ENCODE measurements at regions of chr15 and their contacts with region 1.

Region 1: DNA sequence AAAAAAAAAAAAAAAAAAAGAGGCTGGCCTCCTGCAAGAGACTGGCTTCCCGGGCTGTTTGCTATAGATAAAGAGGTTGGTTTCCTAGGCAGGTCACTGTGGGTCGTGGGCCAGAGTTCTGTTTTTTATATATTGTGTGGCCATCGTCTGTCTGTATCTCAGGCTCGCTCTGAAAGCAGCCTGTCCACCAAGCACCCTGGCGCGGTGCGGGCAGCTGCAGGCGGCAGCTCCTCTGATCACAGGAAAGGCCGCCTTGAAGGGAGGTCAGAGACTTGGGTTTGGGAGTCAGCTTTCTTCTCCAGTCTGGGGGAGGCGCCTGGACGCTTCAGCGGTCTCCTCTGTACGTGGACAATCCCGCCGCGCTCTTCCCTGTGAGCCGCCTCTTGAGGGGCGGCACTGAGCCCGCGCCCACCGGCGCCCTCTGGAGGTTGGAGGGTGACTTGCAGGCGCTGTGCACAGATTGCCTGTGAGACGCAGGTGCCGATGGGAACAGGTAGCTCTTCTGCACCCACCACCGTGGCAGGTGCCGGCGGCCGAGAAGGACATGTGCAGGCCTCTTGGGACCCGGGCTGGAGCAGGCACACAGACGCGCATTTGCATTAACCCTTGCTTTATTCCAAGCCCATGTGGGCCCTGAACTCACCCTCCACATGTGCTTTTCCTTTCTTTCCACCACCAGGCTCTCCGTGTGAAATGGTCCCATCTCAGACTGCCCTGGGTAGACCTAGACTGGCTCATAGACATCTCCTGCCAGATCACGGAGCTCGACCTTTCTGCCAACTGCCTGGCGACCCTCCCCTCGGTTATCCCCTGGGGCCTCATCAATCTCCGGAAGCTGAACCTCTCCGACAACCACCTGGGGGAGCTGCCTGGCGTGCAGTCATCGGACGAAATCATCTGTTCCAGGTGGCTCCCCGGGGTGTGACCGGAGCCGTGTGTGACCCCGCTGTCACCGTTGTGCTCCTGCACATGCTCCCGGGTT is 89.3 kb downstream of the LRRK1 start:
- DNase-seq: peak; percentile 40
- ATAC-seq: peak; percentile 95
- H3K4me3 ChIP-seq: peak overlapping the region; percentile 73
- H3K27ac ChIP-seq: peak overlapping the region; percentile 40; the same call in 1 of the 2 replicates
- H3K4me1 ChIP-seq: peaks cover 11% of the 10 kb centered on the region
- H3K27me3 ChIP-seq: no peaks in the 10 kb centered on the region
- CTCF ChIP-seq: peak; percentile 96 to 100 (median 98)
- EP300 ChIP-seq: no peak
- POLR2A ChIP-seq: no peak; the same call in none of the 2 replicates
- RAD21 ChIP-seq: peak; percentile 67

Region 2: DNA sequence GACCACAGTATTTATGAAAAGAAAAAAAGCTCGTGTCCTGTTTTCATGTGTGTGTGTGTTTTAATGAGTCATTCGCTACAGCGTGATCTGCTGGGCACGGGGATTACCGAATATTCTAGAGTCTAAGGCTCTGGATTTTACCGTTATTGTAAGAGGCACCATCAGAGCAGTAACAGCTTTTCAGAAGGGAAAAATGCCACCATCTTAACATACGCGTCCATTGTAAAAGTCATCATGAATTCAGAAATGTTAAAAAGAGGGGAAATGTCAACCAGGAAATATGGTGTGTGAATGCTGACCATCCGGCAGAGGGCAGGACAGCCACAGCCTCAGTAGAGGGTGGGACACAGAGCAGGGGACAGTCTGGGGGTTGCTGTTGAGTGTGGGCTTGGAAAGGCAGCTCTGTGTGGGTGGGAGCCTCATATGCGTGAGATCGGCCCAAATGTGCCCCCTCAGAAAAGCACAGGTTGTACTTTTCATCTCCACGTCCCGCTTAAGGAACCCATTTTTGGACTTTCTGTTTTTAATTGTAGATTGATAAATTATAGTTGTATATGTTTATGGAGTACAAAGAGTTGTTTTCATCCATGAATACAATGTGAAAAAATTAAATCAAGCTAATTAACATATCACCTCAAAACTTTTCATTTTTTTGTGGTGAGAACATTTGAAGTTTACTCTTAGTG is 336.4 kb before region 1 on chr15:
- CTCF ChIA-PET with region 1: interaction called, 3 read pairs
- POLR2A ChIA-PET with region 1: no interaction called
- RAD21 ChIA-PET with region 1: interaction called, 3 read pairs
- SMC1A ChIA-PET with region 1: no interaction called
- in situ Hi-C with region 1: no loop called
- intact Hi-C with region 1: loop called (anchors 2 kb)
- DNase-seq: no peak
- ATAC-seq: peak; percentile 82
- H3K4me3 ChIP-seq: no peak overlapping the region
- H3K27ac ChIP-seq: no peak overlapping the region
- H3K4me1 ChIP-seq: no peaks in the 10 kb centered on the region
- H3K27me3 ChIP-seq: no peaks in the 10 kb centered on the region
- CTCF ChIP-seq: peak; percentile 31 to 48 (median 45); a peak in 5 of 6 replicates
- EP300 ChIP-seq: no peak
- POLR2A ChIP-seq: no peak
- RAD21 ChIP-seq: peak; percentile 56

Region 3: GRCh38 chr15:100918034-100918689 is 90.3 kb before region 1 on chr15:
- CTCF ChIA-PET with region 1: interaction called, 567 read pairs
- POLR2A ChIA-PET with region 1: interaction called, 60 read pairs
- RAD21 ChIA-PET with region 1: interaction called, 287 read pairs
- SMC1A ChIA-PET with region 1: interaction called, 316 read pairs
- in situ Hi-C with region 1: loop called (anchors 5 kb)
- intact Hi-C with region 1: loop called (anchors 1 kb)
- DNase-seq: no peak
- ATAC-seq: peak; percentile 83
- H3K4me3 ChIP-seq: peak overlapping the region; percentile 89
- H3K27ac ChIP-seq: peak overlapping the region; percentile 83
- H3K4me1 ChIP-seq: peaks cover 21% of the 10 kb centered on the region
- H3K27me3 ChIP-seq: no peaks in the 10 kb centered on the region
- CTCF ChIP-seq: peak; percentile 93 to 98 (median 96)
- EP300 ChIP-seq: no peak
- POLR2A ChIP-seq: peak; percentile 46; the same call in 1 of the 2 replicates
- RAD21 ChIP-seq: peak; percentile 87

Region 4: GRCh38 chr15:100940767-100941379 is 67.6 kb before region 1 on chr15:
- CTCF ChIA-PET with region 1: interaction called, 73 read pairs
- POLR2A ChIA-PET with region 1: interaction called, 9 read pairs
- RAD21 ChIA-PET with region 1: interaction called, 39 read pairs
- SMC1A ChIA-PET with region 1: interaction called, 56 read pairs
- in situ Hi-C with region 1: no loop called
- intact Hi-C with region 1: no loop called
- DNase-seq: no peak
- ATAC-seq: peak; percentile 87
- H3K4me3 ChIP-seq: peak overlapping the region; percentile 31; the same call in 1 of the 2 replicates
- H3K27ac ChIP-seq: peak overlapping the region; percentile 85
- H3K4me1 ChIP-seq: peaks cover 38% of the 10 kb centered on the region
- H3K27me3 ChIP-seq: no peaks in the 10 kb centered on the region
- CTCF ChIP-seq: no peak
- EP300 ChIP-seq: peak; percentile 13 to 32; a peak in 1 of 4 replicates
- POLR2A ChIP-seq: peak; percentile 47
- RAD21 ChIP-seq: no peak

Region 5: DNA sequence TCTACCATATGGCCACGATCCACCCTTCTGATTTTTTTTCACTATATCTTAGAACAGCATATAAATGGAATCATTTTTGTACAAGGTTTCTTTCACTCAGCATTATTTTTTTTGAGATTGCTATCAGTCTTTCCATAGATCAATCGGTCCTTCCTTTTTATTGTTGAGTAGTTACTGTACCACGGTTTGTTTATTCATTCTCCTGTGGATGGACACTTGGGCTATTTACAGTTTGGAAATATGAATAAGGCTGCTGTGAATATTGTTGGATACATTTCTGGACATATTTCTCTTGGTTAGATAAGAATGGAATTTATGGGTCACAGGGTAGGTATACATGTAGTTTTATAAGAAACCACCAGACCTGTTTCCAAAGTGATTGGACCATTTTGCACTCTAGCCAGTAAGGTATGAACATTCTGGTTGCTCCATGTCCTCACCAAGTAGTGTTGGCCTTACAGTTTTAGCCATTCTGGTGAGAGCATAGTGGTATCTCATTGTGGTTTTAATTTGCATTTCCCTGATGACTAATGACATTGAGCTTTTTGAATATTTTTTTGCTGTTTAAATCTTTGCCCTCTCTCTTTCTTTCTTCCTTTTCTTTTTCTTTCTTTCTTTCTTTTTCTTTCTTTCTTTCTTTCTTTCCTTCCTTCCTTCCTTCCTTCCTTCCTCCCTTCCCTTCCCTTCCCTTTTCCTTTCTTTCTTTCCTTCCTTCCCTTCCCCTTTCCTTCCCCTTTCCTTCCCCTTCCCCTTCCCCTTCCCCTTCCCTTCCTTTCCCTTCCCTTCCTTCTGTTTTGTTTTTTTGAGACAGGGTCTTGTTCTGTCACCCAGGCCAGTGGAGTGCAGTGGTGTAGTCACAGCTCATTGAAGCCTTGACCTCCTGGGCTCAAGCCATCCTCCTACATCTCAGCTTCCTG is 40.1 kb before region 1 on chr15:
- CTCF ChIA-PET with region 1: interaction called, 18 read pairs
- POLR2A ChIA-PET with region 1: interaction called, 4 read pairs
- RAD21 ChIA-PET with region 1: interaction called, 6 read pairs
- SMC1A ChIA-PET with region 1: interaction called, 5 read pairs
- in situ Hi-C with region 1: no loop called
- intact Hi-C with region 1: no loop called
- DNase-seq: peak; percentile 30
- ATAC-seq: peak; percentile 88
- H3K4me3 ChIP-seq: no peak overlapping the region
- H3K27ac ChIP-seq: no peak overlapping the region
- H3K4me1 ChIP-seq: peaks cover 7% of the 10 kb centered on the region
- H3K27me3 ChIP-seq: no peaks in the 10 kb centered on the region
- CTCF ChIP-seq: no peak
- EP300 ChIP-seq: no peak
- POLR2A ChIP-seq: no peak
- RAD21 ChIP-seq: no peak

Region 6: GRCh38 chr15:100994597-100995446 is 13.6 kb before region 1 on chr15:
- CTCF ChIA-PET with region 1: interaction called, 33 read pairs
- POLR2A ChIA-PET with region 1: interaction called, 3 read pairs
- RAD21 ChIA-PET with region 1: interaction called, 6 read pairs
- SMC1A ChIA-PET with region 1: interaction called, 6 read pairs
- in situ Hi-C with region 1: no loop called
- intact Hi-C with region 1: no loop called
- DNase-seq: no peak
- ATAC-seq: no peak
- H3K4me3 ChIP-seq: no peak overlapping the region
- H3K27ac ChIP-seq: no peak overlapping the region
- H3K4me1 ChIP-seq: peaks cover 5% of the 10 kb centered on the region; the same call in 1 of the 2 replicates
- H3K27me3 ChIP-seq: no peaks in the 10 kb centered on the region
- CTCF ChIP-seq: no peak
- EP300 ChIP-seq: no peak
- POLR2A ChIP-seq: no peak
- RAD21 ChIP-seq: no peak

Region 7: GRCh38 chr15:101258238-101259144 is 250.0 kb after region 1 on chr15:
- CTCF ChIA-PET with region 1: interaction called, 74 read pairs
- POLR2A ChIA-PET with region 1: no interaction called
- RAD21 ChIA-PET with region 1: interaction called, 9 read pairs
- SMC1A ChIA-PET with region 1: interaction called, 38 read pairs
- in situ Hi-C with region 1: no loop called
- intact Hi-C with region 1: no loop called
- DNase-seq: peak; percentile 51
- ATAC-seq: peak; percentile 88
- H3K4me3 ChIP-seq: no peak overlapping the region
- H3K27ac ChIP-seq: no peak overlapping the region
- H3K4me1 ChIP-seq: peaks cover 9% of the 10 kb centered on the region
- H3K27me3 ChIP-seq: no peaks in the 10 kb centered on the region
- CTCF ChIP-seq: peak; percentile 76 to 95 (median 92); a peak in 5 of 6 replicates
- EP300 ChIP-seq: peak in 1 of 2 experiments; percentile 70; a peak in 2 of 4 replicates
- POLR2A ChIP-seq: no peak
- RAD21 ChIP-seq: peak; percentile 97

Measured in GM12878 (cell line).